Mammary epithelial cell (primary cell): ENCODE measurements at regions of chr4 and their contacts with region 1.

Region 1: GRCh38 chr4:13920901-13921300 is 293.4 kb upstream of the BOD1L1 start:
- DNase-seq: peak; percentile 100
- H3K4me3 ChIP-seq: no peak overlapping the region
- H3K27ac ChIP-seq: peak overlapping the region; percentile 100
- H3K4me1 ChIP-seq: peaks cover 52% of the 10 kb centered on the region
- H3K27me3 ChIP-seq: no peaks in the 10 kb centered on the region
- CTCF ChIP-seq: no peak

Region 2: GRCh38 chr4:13705521-13706041 is 215.3 kb before region 1 on chr4:
- CTCF ChIA-PET with region 1: no interaction called
- dilution Hi-C with region 1: no loop called
- in situ Hi-C with region 1: no loop called
- intact Hi-C with region 1: loop called (anchors 1 kb)
- DNase-seq: peak; percentile 81
- H3K4me3 ChIP-seq: peak overlapping the region in 1 of 3 experiments; percentile 28
- H3K27ac ChIP-seq: peak overlapping the region; percentile 91
- H3K4me1 ChIP-seq: peaks cover 51% of the 10 kb centered on the region
- H3K27me3 ChIP-seq: no peaks in the 10 kb centered on the region
- CTCF ChIP-seq: no peak

Region 3: GRCh38 chr4:13907255-13907751 is 13.6 kb before region 1 on chr4:
- CTCF ChIA-PET with region 1: interaction called, 3 read pairs
- dilution Hi-C with region 1: no loop called
- in situ Hi-C with region 1: no loop called
- intact Hi-C with region 1: loop called (anchors 1 kb)
- DNase-seq: peak; percentile 97
- H3K4me3 ChIP-seq: no peak overlapping the region
- H3K27ac ChIP-seq: peak overlapping the region; percentile 86
- H3K4me1 ChIP-seq: peaks cover 30% of the 10 kb centered on the region
- H3K27me3 ChIP-seq: no peaks in the 10 kb centered on the region
- CTCF ChIP-seq: peak; percentile 18 to 38

Region 4: GRCh38 chr4:13980317-13981310 is 59.7 kb after region 1 on chr4:
- CTCF ChIA-PET with region 1: no interaction called
- dilution Hi-C with region 1: loop called (anchors 5 kb)
- in situ Hi-C with region 1: no loop called
- intact Hi-C with region 1: loop called (anchors 5 kb)
- DNase-seq: peak; percentile 94
- H3K4me3 ChIP-seq: no peak overlapping the region
- H3K27ac ChIP-seq: no peak overlapping the region
- H3K4me1 ChIP-seq: peaks cover 8% of the 10 kb centered on the region
- H3K27me3 ChIP-seq: peaks cover 30% of the 10 kb centered on the region
- CTCF ChIP-seq: no peak

Region 5: DNA sequence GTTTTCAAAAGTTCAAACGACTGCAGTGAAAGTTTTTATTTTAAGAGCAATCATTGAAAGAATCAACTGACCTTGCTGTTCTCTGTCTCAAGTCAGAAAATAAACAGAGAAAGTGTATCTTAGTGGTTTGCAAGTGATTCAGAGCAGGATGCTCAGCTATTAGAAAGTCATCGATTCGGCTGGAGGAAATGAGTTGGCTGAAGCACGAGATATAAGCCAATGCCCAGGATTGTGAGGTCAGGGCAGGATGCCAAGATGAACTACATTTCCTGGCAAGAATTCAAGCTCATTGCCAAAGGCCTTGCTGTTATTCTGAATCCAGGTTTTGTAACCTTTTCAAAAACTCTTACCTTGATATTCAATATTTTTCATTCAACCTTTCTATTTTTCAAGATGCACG is 248.0 kb after region 1 on chr4:
- CTCF ChIA-PET with region 1: no interaction called
- dilution Hi-C with region 1: no loop called
- in situ Hi-C with region 1: no loop called
- intact Hi-C with region 1: loop called (anchors 2 kb)
- DNase-seq: peak; percentile 96
- H3K4me3 ChIP-seq: no peak overlapping the region
- H3K27ac ChIP-seq: peak overlapping the region; percentile 83
- H3K4me1 ChIP-seq: peaks cover 25% of the 10 kb centered on the region
- H3K27me3 ChIP-seq: no peaks in the 10 kb centered on the region
- CTCF ChIP-seq: no peak